Activated T-helper 2 cell treated with anti-CD3 and anti-CD28 coated beads, Interferon-gamma antibody, Interleukin-2, Interleukin-4, amounts not matched to agents 10 μg/mL and 5 μg/mL and 100 μg/mL, durations not matched to agents 14 hours and 24 hours and 36 hours (primary cell): ENCODE measurements at regions of chr2 and their contacts with region 1.

Region 1: DNA sequence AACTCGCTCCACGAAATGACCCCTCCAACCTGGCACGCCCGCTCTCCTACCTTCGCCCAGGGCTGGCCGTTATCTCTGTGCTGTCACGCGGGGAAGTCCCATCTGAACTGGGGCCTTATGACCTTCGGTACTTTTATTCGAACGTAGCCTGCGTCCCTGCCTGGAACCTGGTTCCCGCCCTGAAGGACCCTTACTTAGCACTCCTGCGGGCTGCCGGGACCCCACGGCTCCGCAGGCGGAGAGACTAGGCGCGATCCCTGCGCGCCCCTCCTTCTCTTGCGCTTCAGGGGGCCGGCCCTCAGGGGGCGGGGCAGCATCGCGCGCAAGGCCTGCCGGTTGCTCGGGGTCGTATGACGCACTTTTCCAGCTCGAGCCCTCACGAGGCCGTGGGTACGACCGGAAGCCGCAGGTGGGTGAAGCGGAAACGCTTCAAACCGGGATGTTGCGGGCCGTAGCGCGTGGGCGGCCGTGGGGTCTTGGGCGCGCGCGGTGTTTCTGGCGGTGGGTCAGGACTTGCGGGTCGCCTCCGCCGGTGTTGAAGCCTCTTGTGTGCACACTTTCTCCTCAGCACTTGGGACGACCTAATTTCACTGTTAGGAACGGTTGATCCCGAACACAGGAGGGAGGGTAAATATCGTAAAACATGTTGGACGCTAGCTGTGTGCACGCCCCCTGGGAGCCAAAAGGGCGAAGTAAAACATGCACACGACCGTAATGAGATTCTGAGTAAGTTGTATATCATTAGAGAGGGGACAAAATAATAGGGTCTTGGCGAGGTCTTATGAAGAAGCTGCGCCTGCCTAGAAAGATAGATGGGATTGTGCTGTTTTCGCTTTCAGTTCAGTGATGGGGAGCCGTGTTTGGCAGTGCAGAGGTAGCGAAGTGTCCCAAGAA is at the starts of genes LIPT1 and TSGA10:
- DNase-seq: peak; percentile 88
- H3K4me3 Mint-ChIP-seq: peak within 1 kb of the TSS; percentile 95
- H3K27ac Mint-ChIP-seq: peak within 1 kb of the TSS; percentile 89
- H3K4me1 Mint-ChIP-seq: peaks cover 25% of the 10 kb centered on the region
- H3K27me3 Mint-ChIP-seq: no peaks in the 10 kb centered on the region
- total RNA-seq, gene LIPT1: 3.4 and 3.5 TPM in 2 replicates
- total RNA-seq, gene TSGA10: 3.3 and 3.4 TPM in 2 replicates

Region 2: GRCh38 chr2:98771721-98772524 is 383.0 kb before region 1 on chr2:
- intact Hi-C with region 1: loop called (anchors 10 kb)
- DNase-seq: peak; percentile 69
- H3K4me3 Mint-ChIP-seq: peak overlapping the region; percentile 91
- H3K27ac Mint-ChIP-seq: peak overlapping the region; percentile 97
- H3K4me1 Mint-ChIP-seq: peaks cover 63% of the 10 kb centered on the region
- H3K27me3 Mint-ChIP-seq: no peaks in the 10 kb centered on the region

Region 3: GRCh38 chr2:99141110-99142108 is 13.5 kb before region 1 on chr2 and contains the start of gene C2orf15:
- intact Hi-C with region 1: loop called (anchors 1 kb)
- DNase-seq: peak; percentile 91
- H3K4me3 Mint-ChIP-seq: peak within 1 kb of the TSS; percentile 83
- H3K27ac Mint-ChIP-seq: peak within 1 kb of the TSS; percentile 65
- H3K4me1 Mint-ChIP-seq: peaks cover 8% of the 10 kb centered on the region
- H3K27me3 Mint-ChIP-seq: peaks cover 24% of the 10 kb centered on the region
- total RNA-seq, gene C2orf15: 0.16 TPM in 1 of 2 replicates, not detected in the other

Region 4: GRCh38 chr2:99190548-99190947 is 35.7 kb after region 1 on chr2:
- intact Hi-C with region 1: no loop called
- DNase-seq: no peak
- H3K4me3 Mint-ChIP-seq: no peak overlapping the region
- H3K27ac Mint-ChIP-seq: no peak overlapping the region
- H3K4me1 Mint-ChIP-seq: peaks cover 5% of the 10 kb centered on the region
- H3K27me3 Mint-ChIP-seq: no peaks in the 10 kb centered on the region

Region 5: DNA sequence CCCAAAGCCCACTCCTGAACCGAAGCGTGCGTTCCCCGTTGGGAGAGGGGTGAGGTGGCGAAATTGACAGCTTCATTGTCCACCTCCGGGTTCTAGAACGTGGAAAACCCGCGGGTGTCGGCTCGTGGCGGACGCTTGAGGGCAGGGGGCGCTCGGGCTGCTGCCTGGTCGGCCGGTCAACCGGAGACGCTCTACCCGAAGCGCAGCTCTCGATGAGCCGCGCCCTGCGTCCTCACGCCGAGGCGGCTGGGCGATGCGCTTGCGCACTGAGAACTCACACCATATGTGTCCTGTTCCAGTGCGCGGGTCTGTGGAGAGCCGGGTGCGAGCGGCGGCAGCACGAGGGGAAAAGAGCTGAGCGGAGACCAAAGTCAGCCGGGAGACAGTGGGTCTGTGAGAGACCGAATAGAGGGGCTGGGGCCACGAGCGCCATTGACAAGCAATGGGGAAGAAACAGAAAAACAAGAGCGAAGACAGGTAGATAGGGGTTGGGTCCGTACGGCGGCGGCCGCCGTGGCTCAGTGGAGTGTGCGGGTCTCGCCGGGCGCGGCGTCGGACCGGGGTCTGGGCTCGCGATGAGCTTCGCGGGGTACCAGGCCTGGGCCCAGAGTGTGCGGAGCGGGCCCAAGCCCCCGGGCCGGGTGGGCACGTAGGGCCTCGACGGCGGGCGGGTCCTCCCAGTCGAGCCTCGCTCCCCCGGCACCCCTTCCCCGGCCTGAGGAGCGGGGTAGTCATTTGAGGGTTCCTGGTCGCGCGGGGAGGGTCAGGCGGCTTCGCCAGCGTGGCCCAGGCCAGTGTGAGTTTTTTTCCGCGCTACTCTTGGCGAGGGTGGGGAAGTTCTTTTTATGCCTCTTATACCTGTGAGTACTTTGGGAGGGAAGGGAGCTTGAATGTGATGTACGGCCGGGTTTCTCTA is 182.5 kb after region 1 on chr2 and contains the start of gene EIF5B:
- intact Hi-C with region 1: loop called (anchors 2 kb)
- DNase-seq: peak; percentile 89
- H3K4me3 Mint-ChIP-seq: no peak within 1 kb of the TSS
- H3K27ac Mint-ChIP-seq: no peak within 1 kb of the TSS
- H3K4me1 Mint-ChIP-seq: peaks cover 30% of the 10 kb centered on the region
- H3K27me3 Mint-ChIP-seq: no peaks in the 10 kb centered on the region
- total RNA-seq, gene EIF5B: 76.3 and 81.0 TPM in 2 replicates

Region 6: DNA sequence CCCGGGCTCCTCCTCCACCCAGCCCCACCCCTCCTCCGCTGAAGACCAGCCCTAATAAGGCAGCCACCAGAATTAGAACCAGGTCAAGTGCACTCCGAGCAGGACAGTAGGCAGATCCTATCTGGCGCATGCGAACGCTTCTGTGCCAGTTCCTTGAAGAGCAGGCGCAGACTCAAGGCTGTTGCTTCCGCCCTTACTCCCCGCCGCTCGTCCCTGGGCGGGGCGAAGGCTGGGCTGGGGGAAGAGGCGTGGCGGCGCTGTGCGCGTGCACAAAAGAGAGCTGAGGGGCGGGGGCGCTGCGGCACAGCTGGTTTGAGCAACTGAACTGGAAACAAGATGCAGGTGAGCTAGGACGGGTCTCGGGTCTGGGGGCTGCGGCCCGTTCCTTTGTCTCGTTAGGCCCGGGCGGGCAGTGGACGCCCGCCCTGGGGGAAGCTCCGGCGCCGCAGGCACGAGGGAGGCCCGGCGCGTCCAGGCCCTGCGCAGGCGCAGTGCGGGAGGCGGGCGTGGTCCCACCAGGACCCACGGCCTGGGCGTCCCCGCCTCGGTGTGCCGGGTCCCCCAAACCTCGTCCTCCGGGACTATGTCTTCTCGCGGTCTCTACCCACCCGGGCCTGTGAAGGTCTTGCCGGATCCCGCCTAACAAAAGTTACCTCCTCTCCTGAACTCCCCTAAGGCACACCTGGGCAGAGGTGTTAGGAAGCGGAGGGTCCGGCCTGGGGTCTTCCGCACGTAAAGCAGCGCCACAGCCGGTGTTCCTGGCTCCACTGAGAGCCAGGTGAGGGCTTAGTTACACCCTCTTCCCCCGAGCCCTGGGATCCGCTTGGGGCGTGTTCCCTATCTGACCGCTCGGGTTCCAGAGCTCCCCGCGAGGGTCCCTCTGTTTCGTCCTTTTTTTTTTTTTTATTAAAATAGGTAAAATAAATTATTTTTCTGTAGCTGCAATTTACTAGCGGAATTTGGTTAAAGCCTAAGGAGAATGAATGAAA is 1408.1 kb after region 1 on chr2 and contains the start of gene PDCL3:
- intact Hi-C with region 1: loop called (anchors 10 kb)
- DNase-seq: peak; percentile 94
- H3K4me3 Mint-ChIP-seq: peak within 1 kb of the TSS; percentile 88
- H3K27ac Mint-ChIP-seq: peak within 1 kb of the TSS; percentile 99
- H3K4me1 Mint-ChIP-seq: peaks cover 36% of the 10 kb centered on the region
- H3K27me3 Mint-ChIP-seq: no peaks in the 10 kb centered on the region
- total RNA-seq, gene PDCL3: 42.5 and 48.8 TPM in 2 replicates